ENCODE measurements at regions of chr10 and their contacts with region 1.

Region 1: GRCh38 chr10:50636618-50637579 is 13.1 kb upstream of the SGMS1 start:
- DNase-seq: peak; percentile 68
- ATAC-seq: peak; percentile 93
- H3K4me3 Mint-ChIP-seq: peak overlapping the region; percentile 64
- H3K27ac Mint-ChIP-seq: peak overlapping the region; percentile 70
- H3K4me1 Mint-ChIP-seq: peaks cover 32% of the 10 kb centered on the region
- H3K27me3 Mint-ChIP-seq: peaks cover 34% of the 10 kb centered on the region

Region 2: DNA sequence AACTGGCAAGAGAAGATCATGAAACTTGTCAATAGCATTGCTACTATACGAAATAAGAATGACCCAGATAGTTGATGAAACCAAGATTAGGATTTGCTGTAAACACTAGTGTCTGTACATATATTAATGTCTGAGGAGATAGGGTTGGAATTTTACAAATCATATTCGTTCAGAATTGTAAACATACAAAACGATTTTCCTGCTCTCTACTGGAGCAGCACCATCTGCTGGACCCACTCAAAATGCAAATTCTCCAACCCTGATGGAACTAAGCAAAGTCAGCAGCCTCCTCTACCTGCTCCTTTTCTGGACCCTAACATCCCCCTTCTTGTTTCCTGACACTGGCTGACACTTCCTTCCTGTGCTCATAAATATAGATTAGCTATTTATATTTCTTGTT is 16.2 kb after region 1 on chr10:
- CTCF ChIA-PET with region 1: interaction called, 13 read pairs
- POLR2A ChIA-PET with region 1: no interaction called
- DNase-seq: peak; percentile 43
- ATAC-seq: peak; percentile 57
- H3K4me3 Mint-ChIP-seq: no peak overlapping the region
- H3K27ac Mint-ChIP-seq: no peak overlapping the region
- H3K4me1 Mint-ChIP-seq: peaks cover 17% of the 10 kb centered on the region
- H3K27me3 Mint-ChIP-seq: peaks cover 10% of the 10 kb centered on the region

Region 3: DNA sequence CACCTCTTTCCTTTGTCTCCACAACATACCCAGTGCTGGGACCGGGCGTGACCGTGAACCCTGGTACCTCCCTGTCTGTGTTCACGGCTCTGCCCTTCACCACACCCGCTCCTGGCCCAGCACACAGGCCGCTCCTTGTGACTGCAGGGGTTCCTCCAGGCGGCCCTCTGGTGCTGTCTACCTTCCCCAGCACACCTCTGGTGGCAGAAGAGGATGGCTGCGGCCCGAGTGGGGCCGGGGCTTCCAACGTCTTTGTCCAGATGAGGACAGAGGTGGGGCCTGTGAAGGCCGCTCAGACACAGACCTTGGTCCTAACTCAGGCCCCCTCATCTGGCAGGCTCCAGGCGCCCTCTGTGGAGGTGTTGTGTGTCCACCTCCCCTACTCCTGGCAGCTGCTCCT is 42.2 kb after region 1 on chr10:
- CTCF ChIA-PET with region 1: no interaction called
- POLR2A ChIA-PET with region 1: no interaction called
- DNase-seq: no peak
- ATAC-seq: no peak
- H3K4me3 Mint-ChIP-seq: no peak overlapping the region
- H3K27ac Mint-ChIP-seq: no peak overlapping the region
- H3K4me1 Mint-ChIP-seq: no peaks in the 10 kb centered on the region
- H3K27me3 Mint-ChIP-seq: peaks cover 2% of the 10 kb centered on the region